B cell (primary cell): ENCODE measurements at regions of chr11 and their contacts with region 1.

Region 1: GRCh38 chr11:92413757-92414513 is 189.3 kb downstream of the FAT3 start:
- DNase-seq: peak; percentile 55
- ATAC-seq: no peak
- H3K4me3 ChIP-seq: no peak overlapping the region
- H3K4me3 Mint-ChIP-seq: peak overlapping the region; percentile 32
- H3K27ac ChIP-seq: no peak overlapping the region
- H3K27ac Mint-ChIP-seq: no peak overlapping the region
- H3K4me1 ChIP-seq: peaks cover 15 to 24% of the 10 kb centered on the region in 2 donors
- H3K4me1 Mint-ChIP-seq: peaks cover 11% of the 10 kb centered on the region
- H3K27me3 ChIP-seq: no peaks in the 10 kb centered on the region
- H3K27me3 Mint-ChIP-seq: no peaks in the 10 kb centered on the region
- CTCF ChIP-seq: no peak

Region 2: DNA sequence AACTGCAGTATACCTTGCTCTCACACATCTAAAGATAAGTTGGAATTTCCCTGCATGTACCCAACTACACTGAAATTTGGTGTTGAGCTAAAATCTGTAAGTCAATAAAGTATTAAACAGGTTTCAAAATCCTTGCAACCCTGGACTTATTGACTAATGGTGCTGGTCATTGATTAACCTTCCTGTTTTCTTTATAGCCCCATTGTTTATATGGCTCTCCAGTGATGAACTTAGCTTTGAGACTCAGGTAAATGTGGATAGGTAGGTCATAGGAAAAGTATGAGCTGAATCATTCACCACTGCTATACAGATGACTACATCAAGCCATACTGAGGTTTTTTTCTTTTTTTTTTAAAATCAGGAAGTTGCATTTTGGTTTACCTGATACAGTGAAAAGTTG is 56.6 kb before region 1 on chr11:
- CTCF ChIA-PET with region 1: no interaction called
- POLR2A ChIA-PET with region 1: no interaction called
- intact Hi-C with region 1: loop called (anchors 10 kb)
- DNase-seq: no peak
- ATAC-seq: no peak
- H3K4me3 ChIP-seq: no peak overlapping the region
- H3K4me3 Mint-ChIP-seq: no peak overlapping the region
- H3K27ac ChIP-seq: no peak overlapping the region
- H3K27ac Mint-ChIP-seq: no peak overlapping the region
- H3K4me1 ChIP-seq: no peaks in the 10 kb centered on the region
- H3K4me1 Mint-ChIP-seq: no peaks in the 10 kb centered on the region
- H3K27me3 ChIP-seq: no peaks in the 10 kb centered on the region
- H3K27me3 Mint-ChIP-seq: no peaks in the 10 kb centered on the region
- CTCF ChIP-seq: no peak